ENCODE measurements at regions of chr12 and their contacts with region 1.

Region 1: DNA sequence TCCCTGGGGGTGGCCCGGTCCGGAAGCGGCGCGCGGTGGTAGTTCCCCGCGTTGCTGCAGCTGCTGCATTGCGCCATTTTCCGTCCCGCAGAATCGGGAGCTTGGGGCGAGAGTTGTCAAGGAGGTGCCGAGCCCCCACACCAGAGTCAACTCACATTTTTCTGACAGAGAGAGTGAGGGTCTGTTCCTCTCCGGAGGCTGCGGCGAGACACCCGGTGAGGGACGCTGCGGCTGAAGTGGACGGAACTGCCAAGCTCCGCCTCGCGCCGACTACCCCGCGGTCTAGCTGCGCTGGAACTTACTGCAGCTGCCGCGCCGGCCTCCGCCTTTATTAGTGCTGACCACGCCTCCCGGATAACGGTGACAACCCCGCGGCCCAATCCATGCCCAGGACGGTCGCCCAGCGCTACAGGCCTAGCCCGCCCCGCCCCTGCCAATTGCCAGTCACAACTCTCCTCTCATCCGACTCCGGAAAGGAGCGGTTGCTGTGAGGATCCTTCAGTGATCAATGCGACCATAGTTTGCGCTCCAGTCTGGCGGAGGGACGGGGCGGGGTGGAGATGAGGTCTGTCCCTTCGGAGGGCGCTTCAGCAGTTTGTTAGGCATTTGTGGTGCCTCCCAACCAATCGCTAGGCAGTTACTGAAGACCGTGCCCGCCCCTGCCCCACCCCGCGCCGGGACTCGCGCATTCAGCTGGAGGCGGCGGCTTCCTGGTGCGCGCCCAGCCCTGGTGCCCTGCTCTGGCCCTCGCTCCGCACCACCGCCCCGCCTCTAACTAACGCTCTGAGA is at the start of gene VAMP1:
- DNase-seq: peak; percentile 98 to 99
- ATAC-seq: peak; percentile 95 to 96 (median 96)
- H3K4me3 ChIP-seq: peak within 1 kb of the TSS; percentile 91
- H3K27ac ChIP-seq: peak within 1 kb of the TSS; percentile 95
- H3K4me1 ChIP-seq: peaks cover 21% of the 10 kb centered on the region
- H3K27me3 ChIP-seq: no peaks in the 10 kb centered on the region
- CTCF ChIP-seq: no peak
- total RNA-seq, gene VAMP1: 1.5 to 6.2 (median 3.2) TPM

Region 2: DNA sequence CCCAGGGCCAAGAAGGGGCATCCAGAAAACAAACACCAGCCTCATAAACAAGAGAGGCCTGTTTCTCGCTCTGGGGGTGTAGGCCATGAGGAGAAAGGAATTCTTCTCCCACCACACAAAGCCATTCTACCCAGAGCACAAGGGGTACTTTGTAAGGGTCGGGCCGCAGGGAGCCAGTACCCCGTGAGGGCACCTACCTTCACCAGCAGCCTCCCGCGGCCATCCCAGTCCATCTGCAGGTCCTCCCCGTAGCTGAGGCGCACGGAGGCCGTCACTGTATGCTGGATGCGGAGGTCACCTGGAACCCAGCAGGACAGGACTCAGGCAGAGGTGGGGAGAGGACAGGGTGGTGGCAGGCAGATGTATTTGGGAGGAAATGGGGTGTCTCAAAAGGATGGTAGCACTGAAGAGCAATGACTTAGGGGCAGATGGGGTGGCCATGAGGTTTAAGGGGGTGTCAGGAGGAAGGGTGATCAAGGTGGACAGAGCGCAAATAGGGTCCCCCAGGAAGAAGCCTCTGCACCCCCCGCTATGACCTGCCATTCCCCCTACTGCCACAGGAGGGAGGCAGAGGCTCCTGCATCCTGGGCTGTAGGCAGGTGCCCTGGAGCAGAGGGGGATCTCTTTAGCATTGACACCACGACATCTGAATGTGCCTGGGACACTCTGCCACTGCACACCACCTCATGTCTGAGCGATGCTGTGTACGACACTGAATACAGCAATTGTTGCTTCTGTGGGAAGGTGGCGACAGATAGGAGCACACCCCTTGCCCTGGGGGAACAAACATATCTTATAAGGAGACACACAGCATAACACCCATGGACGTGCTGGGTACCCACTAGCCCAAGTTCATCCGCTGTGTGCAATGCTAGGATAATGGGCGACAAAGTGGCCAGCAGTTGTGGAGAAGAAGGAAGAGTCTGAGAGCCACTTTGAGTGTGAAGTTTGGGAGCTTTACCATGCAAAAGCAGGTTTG is 407.5 kb before region 1 on chr12:
- intact Hi-C with region 1: loop called in 1 of 2 experiments (anchors 10 kb)
- DNase-seq: no peak
- ATAC-seq: peak; percentile 71 to 81 (median 80)
- H3K4me3 ChIP-seq: no peak overlapping the region
- H3K27ac ChIP-seq: no peak overlapping the region
- H3K4me1 ChIP-seq: no peaks in the 10 kb centered on the region
- H3K27me3 ChIP-seq: peaks cover 0 to 9% (median 2%) of the 10 kb centered on the region in 3 donors
- CTCF ChIP-seq: peak; percentile 72

Region 3: DNA sequence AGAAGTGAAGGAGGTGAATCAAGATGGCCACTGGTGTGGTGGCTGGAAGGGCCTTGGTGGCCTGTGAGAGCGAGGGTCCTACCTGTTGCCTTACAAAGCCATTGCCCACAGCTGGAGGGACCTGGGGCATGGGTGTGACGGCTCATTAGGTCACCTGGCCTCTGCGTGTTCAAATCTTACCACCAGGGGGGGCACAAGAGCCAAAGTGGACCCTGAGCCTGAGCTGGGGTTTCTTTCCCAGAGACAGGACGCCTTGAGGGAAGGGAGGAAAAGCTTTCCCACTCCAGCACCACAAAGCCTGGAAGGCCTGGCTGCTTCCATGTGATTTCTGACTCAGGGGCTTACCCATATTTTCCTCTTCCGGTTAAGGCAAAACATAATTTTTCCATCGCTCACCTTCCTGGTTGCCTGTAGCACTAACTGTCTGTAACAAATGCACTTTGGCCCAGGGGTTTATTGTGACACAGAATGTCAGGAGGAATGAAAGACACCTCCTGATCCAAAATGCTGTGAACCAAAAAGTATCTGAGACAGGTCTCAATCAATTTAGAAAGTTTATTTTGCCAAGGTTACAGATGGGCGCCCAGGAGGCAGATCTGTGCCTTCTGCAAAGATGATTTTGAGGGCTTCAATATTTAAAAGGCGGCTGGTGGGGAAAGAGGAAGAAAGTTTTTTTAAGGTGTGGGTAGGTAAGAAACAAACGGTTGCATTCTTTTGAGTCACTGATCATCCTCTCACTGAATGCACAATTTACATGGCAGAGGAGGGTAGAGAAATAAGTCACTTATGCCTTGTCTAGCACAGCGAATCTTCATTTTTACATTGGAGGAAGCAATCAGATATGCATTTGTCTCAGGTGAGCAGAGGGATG is 274.7 kb before region 1 on chr12:
- intact Hi-C with region 1: loop called in 1 of 2 experiments (anchors 10 kb)
- DNase-seq: peak; percentile 83 to 90
- ATAC-seq: peak; percentile 86 to 93 (median 88)
- H3K4me3 ChIP-seq: no peak overlapping the region
- H3K27ac ChIP-seq: peak overlapping the region; percentile 41
- H3K4me1 ChIP-seq: peaks cover 11% of the 10 kb centered on the region
- H3K27me3 ChIP-seq: no peaks in the 10 kb centered on the region
- CTCF ChIP-seq: peak; percentile 96

Region 4: GRCh38 chr12:6326336-6326838 is 144.2 kb before region 1 on chr12:
- intact Hi-C with region 1: loop called in 1 of 2 experiments (anchors 5 kb)
- DNase-seq: peak; percentile 58 to 79
- ATAC-seq: peak; percentile 48 to 69 (median 54)
- H3K4me3 ChIP-seq: peak overlapping the region; percentile 5
- H3K27ac ChIP-seq: peak overlapping the region; percentile 47
- H3K4me1 ChIP-seq: peaks cover 65% of the 10 kb centered on the region
- H3K27me3 ChIP-seq: no peaks in the 10 kb centered on the region
- CTCF ChIP-seq: peak; percentile 63

Region 5: DNA sequence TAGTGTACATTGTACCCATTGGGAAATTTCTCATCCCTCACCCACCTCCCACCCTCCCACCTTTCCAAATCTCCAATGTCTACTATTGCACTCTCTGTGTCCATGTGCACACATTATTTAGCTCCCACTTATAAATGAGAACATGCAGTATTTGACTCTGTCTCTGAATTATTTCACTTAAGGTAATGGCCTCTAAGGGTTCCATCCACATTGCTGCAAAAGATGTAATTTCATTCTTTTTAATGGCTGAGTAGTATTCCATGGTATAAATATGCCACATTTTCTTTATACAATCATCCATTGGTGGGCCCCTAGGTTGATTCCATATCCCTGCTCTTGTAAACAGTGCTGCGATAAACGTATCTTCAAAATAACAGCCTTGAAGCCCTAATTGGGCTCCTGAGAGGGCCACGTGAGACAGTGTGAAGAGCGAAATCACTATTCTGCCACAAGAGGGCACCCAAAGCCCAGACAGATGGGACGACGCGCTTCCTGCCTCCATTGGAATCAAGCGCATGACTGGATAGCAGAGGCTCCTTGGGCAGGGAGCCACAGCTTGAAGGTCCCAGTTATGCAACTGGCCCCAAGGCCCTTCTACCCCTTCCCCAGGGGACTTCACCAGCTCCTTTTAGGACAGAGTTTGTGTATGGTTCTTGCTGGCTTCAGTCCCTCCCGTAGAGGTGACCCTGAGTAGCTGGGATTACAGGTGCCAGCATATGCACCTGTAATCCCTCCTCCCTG is 47.1 kb before region 1 on chr12:
- intact Hi-C with region 1: loop called (anchors 1 to 2 kb)
- DNase-seq: peak; percentile 86 to 91
- ATAC-seq: peak; percentile 98 to 99 (median 98)
- H3K4me3 ChIP-seq: no peak overlapping the region
- H3K27ac ChIP-seq: peak overlapping the region; percentile 54
- H3K4me1 ChIP-seq: peaks cover 8% of the 10 kb centered on the region
- H3K27me3 ChIP-seq: no peaks in the 10 kb centered on the region
- CTCF ChIP-seq: peak; percentile 87

Region 6: DNA sequence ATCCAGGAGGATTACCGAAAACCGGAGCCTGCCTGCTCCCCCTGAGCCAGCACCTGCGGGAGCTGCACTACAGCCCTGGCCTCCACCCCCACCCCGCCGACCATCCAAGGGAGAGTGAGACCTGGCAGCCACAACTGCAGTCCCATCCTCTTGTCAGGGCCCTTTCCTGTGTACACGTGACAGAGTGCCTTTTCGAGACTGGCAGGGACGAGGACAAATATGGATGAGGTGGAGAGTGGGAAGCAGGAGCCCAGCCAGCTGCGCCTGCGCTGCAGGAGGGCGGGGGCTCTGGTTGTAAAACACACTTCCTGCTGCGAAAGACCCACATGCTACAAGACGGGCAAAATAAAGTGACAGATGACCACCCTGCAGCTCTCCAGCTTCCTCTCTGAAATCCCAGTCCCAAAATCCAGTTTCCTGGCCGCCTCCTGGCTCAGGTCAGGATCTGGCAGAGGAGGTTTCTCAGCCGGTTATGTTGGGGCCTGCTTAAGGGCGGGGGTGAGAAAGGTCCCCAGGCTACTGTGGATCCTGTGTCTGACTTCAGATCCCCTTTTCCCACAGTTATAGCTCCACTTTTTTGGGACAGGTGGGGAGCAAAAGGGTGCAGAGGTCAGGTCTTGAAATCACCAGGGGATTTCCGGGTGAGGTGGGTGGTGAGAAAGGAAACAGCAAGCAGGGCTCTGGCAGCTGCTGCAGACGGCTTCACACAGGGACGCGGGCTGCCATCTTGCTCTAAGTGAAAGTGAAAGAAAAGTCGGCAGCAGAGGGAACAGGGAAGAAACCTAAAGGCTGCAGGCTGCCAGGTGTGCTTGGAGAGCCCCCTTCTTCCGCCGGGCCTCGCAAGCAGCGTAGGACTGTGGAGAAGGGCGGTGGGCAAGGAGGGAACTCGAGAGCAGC is 19.0 kb before region 1 on chr12 and contains the start of gene TAPBPL:
- intact Hi-C with region 1: loop called in 1 of 2 experiments (anchors 1 kb)
- DNase-seq: peak; percentile 85 to 89
- ATAC-seq: peak; percentile 90 to 93 (median 91)
- H3K4me3 ChIP-seq: peak within 1 kb of the TSS; percentile 90
- H3K27ac ChIP-seq: peak within 1 kb of the TSS; percentile 95
- H3K4me1 ChIP-seq: peaks cover 11% of the 10 kb centered on the region
- H3K27me3 ChIP-seq: no peaks in the 10 kb centered on the region
- CTCF ChIP-seq: no peak
- total RNA-seq, gene TAPBPL: 6.4 to 11.3 (median 8.4) TPM

Region 7: GRCh38 chr12:6493497-6494257 is 23.1 kb after region 1 on chr12 and contains the start of gene NCAPD2:
- intact Hi-C with region 1: loop called in 1 of 2 experiments (anchors 1 kb)
- DNase-seq: peak; percentile 94 to 97
- ATAC-seq: peak; percentile 94
- H3K4me3 ChIP-seq: peak within 1 kb of the TSS; percentile 89
- H3K27ac ChIP-seq: peak within 1 kb of the TSS; percentile 99
- H3K4me1 ChIP-seq: peaks cover 21% of the 10 kb centered on the region
- H3K27me3 ChIP-seq: no peaks in the 10 kb centered on the region
- CTCF ChIP-seq: peak; percentile 22
- total RNA-seq, gene NCAPD2: 10.1 to 13.4 (median 11.2) TPM

Region 8: GRCh38 chr12:6524648-6525047 is 54.1 kb after region 1 on chr12:
- intact Hi-C with region 1: no loop called
- DNase-seq: no peak
- ATAC-seq: no peak
- H3K4me3 ChIP-seq: no peak overlapping the region
- H3K27ac ChIP-seq: no peak overlapping the region
- H3K4me1 ChIP-seq: no peaks in the 10 kb centered on the region
- H3K27me3 ChIP-seq: no peaks in the 10 kb centered on the region
- CTCF ChIP-seq: no peak